Tibial artery (tissue), 4 donors: ENCODE measurements at regions of chr18 and their contacts with region 1.

Region 1: GRCh38 chr18:56748698-56749268 is 97.6 kb downstream of the WDR7 start:
- DNase-seq: no peak
- H3K4me3 ChIP-seq: no peak overlapping the region
- H3K27ac ChIP-seq: no peak overlapping the region
- H3K4me1 ChIP-seq: no peaks in the 10 kb centered on the region
- H3K27me3 ChIP-seq: no peaks in the 10 kb centered on the region
- CTCF ChIP-seq: peak; percentile 43 to 51

Region 2: DNA sequence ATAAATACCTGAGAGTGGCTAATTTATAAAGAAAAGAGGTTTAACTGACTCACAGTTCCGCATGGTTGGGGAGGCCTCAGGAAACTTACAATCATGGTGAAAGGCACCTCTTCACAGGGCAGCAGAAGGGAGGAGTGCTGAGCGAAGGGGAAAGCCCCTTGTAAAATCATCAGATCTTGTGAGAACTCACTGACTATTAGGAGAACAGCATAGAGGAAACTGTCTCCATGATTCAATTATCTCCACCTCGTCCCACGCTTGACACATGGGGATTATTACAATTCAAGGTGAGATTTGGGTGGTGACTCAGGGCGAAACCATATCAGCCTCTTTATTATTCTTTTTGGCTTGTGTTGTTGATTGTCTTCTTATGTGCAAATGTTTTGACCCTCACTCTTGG is 21.4 kb before region 1 on chr18:
- intact Hi-C with region 1: no loop called
- DNase-seq: no peak
- H3K4me3 ChIP-seq: no peak overlapping the region
- H3K27ac ChIP-seq: no peak overlapping the region
- H3K4me1 ChIP-seq: no peaks in the 10 kb centered on the region
- H3K27me3 ChIP-seq: no peaks in the 10 kb centered on the region
- CTCF ChIP-seq: no peak

Region 3: GRCh38 chr18:57561728-57562423 is 813.1 kb after region 1 on chr18:
- intact Hi-C with region 1: loop called (anchors 10 kb)
- DNase-seq: no peak
- H3K4me3 ChIP-seq: no peak overlapping the region
- H3K27ac ChIP-seq: no peak overlapping the region
- H3K4me1 ChIP-seq: no peaks in the 10 kb centered on the region
- H3K27me3 ChIP-seq: no peaks in the 10 kb centered on the region
- CTCF ChIP-seq: peak; percentile 68 to 81